ENCODE measurements at regions of chr1 and their contacts with region 1.

Region 1: GRCh38 chr1:179809506-179810366 is 66.6 kb downstream of the FAM163A start:
- DNase-seq: peak; percentile 74 to 82 (median 79)
- ATAC-seq: peak; percentile 80
- H3K4me3 ChIP-seq: no peak overlapping the region
- H3K27ac ChIP-seq: no peak overlapping the region
- H3K4me1 ChIP-seq: peaks cover 0 to 18% of the 10 kb centered on the region in 2 experiments; a peak in 4 of 5 replicates
- H3K27me3 ChIP-seq: peaks cover 49 to 83% of the 10 kb centered on the region in 2 experiments
- CTCF ChIP-seq: peak; percentile 87 to 97 (median 90)
- EP300 ChIP-seq: no peak
- POLR2A ChIP-seq: no peak
- RAD21 ChIP-seq: peak; percentile 59 to 78

Region 2: GRCh38 chr1:179241523-179242097 is 568.1 kb before region 1 on chr1:
- CTCF ChIA-PET with region 1: no interaction called
- POLR2A ChIA-PET with region 1: no interaction called
- in situ Hi-C with region 1: loop called (anchors 10 kb)
- intact Hi-C with region 1: no loop called
- DNase-seq: no peak
- ATAC-seq: peak; percentile 40; the same call in 2 of the 3 replicates
- H3K4me3 ChIP-seq: no peak overlapping the region
- H3K27ac ChIP-seq: no peak overlapping the region
- H3K4me1 ChIP-seq: peaks cover 0 to 4% of the 10 kb centered on the region in 2 experiments; a peak in 2 of 5 replicates
- H3K27me3 ChIP-seq: no peaks in the 10 kb centered on the region
- CTCF ChIP-seq: no peak
- EP300 ChIP-seq: no peak
- POLR2A ChIP-seq: no peak
- RAD21 ChIP-seq: no peak

Region 3: GRCh38 chr1:179586107-179586823 is 223.5 kb before region 1 on chr1:
- CTCF ChIA-PET with region 1: no interaction called
- POLR2A ChIA-PET with region 1: no interaction called
- in situ Hi-C with region 1: no loop called
- intact Hi-C with region 1: loop called (anchors 5 kb)
- DNase-seq: peak; percentile 65 to 76 (median 68)
- ATAC-seq: peak; percentile 99
- H3K4me3 ChIP-seq: peak overlapping the region; percentile 24
- H3K27ac ChIP-seq: no peak overlapping the region
- H3K4me1 ChIP-seq: peaks cover 0 to 8% of the 10 kb centered on the region in 2 experiments; a peak in 2 of 5 replicates
- H3K27me3 ChIP-seq: peaks cover 27 to 45% of the 10 kb centered on the region in 2 experiments
- CTCF ChIP-seq: peak; percentile 68 to 97 (median 74)
- EP300 ChIP-seq: no peak
- POLR2A ChIP-seq: no peak
- RAD21 ChIP-seq: peak in 1 of 2 experiments; percentile 43; a peak in 2 of 4 replicates

Region 4: GRCh38 chr1:179824265-179824664 is 14.5 kb after region 1 on chr1:
- CTCF ChIA-PET with region 1: no interaction called
- POLR2A ChIA-PET with region 1: interaction called, 14 read pairs
- in situ Hi-C with region 1: no loop called
- intact Hi-C with region 1: no loop called
- DNase-seq: no peak
- ATAC-seq: peak; percentile 70
- H3K4me3 ChIP-seq: no peak overlapping the region
- H3K27ac ChIP-seq: no peak overlapping the region
- H3K4me1 ChIP-seq: peaks cover 3 to 5% of the 10 kb centered on the region in 2 experiments
- H3K27me3 ChIP-seq: peaks cover 24 to 40% of the 10 kb centered on the region in 2 experiments
- CTCF ChIP-seq: no peak
- EP300 ChIP-seq: no peak
- POLR2A ChIP-seq: no peak
- RAD21 ChIP-seq: no peak

Region 5: DNA sequence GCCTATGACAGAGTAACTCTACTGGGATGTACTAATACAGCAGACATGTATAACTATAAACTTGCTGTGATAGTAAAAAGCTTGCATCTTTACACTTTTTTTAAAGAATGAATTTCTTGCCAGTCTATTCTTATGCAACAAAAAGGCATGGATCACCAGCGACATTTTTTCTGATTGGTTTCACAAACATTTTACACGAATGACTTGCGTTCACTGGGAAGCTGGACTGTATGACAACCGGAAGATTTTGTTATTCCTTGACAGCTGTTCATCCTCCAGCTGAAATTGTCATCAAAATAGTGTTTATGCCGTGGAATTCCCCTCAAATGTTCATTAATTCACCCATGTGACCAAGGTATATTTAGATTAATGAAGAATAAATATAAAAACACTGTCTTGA is 953.1 kb after region 1 on chr1:
- CTCF ChIA-PET with region 1: no interaction called
- POLR2A ChIA-PET with region 1: no interaction called
- in situ Hi-C with region 1: no loop called
- intact Hi-C with region 1: no loop called
- DNase-seq: no peak
- ATAC-seq: no peak
- H3K4me3 ChIP-seq: no peak overlapping the region
- H3K27ac ChIP-seq: no peak overlapping the region
- H3K4me1 ChIP-seq: no peaks in the 10 kb centered on the region
- H3K27me3 ChIP-seq: no peaks in the 10 kb centered on the region
- CTCF ChIP-seq: no peak
- EP300 ChIP-seq: no peak
- POLR2A ChIP-seq: no peak
- RAD21 ChIP-seq: no peak